Activated CD4-positive, alpha-beta memory T cell treated with anti-CD3 and anti-CD28 coated beads, Interleukin-2, amount 10 ng/mL, durations not matched to agents 7 days and 5 days (primary cell): ENCODE measurements at regions of chr15 and their contacts with region 1.

Region 1: DNA sequence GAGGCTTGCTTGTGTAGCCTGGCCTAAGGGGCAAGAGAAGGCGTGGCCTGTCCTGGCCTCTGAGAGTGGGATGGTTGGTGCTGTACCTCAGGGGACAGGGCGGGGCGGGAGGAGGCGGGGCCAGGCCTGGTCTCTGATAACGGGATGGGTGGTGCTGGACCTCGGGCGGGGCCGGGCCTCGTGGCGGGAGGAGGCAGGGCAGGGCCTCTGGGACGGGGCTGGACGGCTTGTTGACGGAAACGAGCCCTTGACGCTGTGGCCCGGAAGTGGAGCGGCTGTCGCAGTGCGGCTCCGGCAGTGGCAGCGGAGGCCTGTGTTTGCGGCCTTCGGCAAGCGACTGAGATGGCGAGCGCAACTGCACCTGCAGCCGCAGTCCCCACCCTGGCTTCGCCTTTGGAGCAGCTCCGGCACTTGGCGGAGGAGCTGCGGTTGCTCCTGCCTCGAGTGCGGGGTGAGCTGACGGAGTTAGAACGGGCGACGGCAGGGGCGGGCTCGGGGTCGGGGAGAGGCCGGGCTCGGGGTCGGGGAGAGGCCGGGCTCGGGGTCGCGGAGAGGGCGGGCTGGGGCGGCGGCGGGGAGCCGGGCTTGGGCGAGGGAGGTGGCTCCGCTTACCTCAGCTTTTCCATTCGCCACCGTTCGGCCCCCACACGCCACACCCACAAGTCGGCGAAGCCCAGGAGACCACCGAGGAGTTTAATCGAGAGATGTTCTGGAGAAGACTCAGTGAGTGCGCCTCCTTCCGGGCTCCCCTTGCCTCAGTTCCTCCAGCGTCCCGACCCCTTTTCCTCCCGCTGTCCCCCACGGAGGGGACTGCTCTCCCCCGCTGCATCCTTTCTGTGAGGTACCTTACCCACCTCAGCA is at the start of gene CCNDBP1:
- DNase-seq: peak; percentile 95
- H3K4me3 Mint-ChIP-seq: peak within 1 kb of the TSS; percentile 86
- H3K27ac Mint-ChIP-seq: peak within 1 kb of the TSS; percentile 95
- H3K4me1 Mint-ChIP-seq: peaks cover 39% of the 10 kb centered on the region
- H3K27me3 Mint-ChIP-seq: no peaks in the 10 kb centered on the region
- total RNA-seq, gene CCNDBP1: 103 to 108 TPM

Region 2: DNA sequence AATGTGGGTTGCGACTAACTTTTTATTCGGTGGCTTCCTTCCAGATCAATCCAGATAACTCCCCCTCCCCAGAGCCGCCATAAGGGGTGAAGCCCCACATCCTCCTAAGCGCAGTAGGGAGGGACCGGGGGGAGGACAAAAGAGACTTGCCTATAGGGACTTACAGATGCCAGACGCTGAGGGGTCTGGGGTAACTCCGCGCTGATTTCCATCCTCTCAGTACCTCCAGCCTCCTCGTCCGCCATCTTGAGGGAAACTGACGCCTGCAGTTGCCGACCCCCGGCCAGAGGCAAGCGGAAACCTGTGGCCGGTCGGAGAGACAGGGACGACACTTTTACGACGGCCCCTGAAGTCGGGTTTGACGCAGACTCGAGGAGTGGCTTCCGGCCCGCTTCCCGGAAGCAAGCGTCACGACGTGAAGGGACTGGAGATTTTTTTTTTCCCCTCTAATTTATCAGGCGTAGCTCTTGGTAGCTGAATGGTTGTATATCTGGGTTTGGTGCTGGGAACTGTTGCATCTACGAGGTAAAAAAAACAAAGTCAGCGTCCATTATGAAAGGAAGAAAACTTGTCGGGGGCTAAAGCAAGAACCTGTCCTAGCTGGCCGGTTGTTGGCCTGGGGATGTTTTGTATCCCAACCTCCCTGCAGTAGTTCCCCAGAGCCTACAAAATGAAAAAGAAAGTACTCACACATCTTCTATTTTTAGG is 79.5 kb before region 1 on chr15 and contains the start of gene UBR1:
- CTCF ChIA-PET with region 1: interaction called, 4 read pairs
- POLR2A ChIA-PET with region 1: interaction called, 17 read pairs
- DNase-seq: peak; percentile 93
- H3K4me3 Mint-ChIP-seq: peak within 1 kb of the TSS; percentile 96
- H3K27ac Mint-ChIP-seq: peak within 1 kb of the TSS; percentile 89
- H3K4me1 Mint-ChIP-seq: peaks cover 43% of the 10 kb centered on the region
- H3K27me3 Mint-ChIP-seq: no peaks in the 10 kb centered on the region
- total RNA-seq, gene UBR1: 41.8 to 42.4 TPM

Region 3: DNA sequence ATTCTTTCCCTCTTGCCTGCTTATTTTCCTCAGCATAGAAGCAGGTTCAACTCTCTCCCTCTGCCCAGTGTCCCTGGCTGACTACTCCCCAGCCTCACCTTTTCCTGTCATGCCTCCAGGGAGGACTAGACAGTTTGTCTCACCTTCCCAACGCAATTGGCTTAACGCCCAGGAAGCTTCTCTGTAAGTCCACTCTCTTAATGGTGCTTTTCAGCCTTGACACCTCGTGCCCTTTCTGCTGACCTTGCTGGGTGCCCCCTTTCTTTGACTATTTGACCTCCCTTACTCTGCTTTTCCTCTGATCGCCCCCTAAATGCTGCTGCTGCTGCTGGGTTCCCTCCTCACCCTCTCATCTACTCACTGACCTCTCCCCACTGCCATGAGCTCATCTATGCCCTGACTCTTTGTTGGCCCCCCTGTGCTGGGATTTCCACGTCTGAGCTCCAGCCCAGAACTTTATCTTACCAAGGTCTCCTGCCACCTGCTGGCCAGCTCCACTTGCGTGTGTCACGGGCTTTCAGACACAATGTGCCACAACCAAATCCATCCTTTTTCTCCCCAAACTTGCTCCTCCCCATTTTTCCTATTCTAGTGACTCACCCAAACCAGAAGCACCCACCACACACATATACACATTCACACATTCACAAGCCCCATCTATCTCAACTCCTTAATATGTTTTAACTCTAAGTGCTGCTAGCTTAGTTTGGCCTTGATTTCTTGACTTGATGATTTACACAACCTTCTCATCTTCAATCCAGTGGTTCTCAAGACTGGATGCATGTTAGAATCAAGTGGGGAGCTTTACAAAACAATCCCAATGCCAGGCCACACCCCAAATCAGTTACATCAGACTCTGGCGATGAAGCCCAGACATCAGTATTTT is 18.9 kb after region 1 on chr15:
- CTCF ChIA-PET with region 1: interaction called, 7 read pairs
- POLR2A ChIA-PET with region 1: interaction called, 10 read pairs
- DNase-seq: peak; percentile 55
- H3K4me3 Mint-ChIP-seq: no peak overlapping the region
- H3K27ac Mint-ChIP-seq: no peak overlapping the region
- H3K4me1 Mint-ChIP-seq: peaks cover 11% of the 10 kb centered on the region
- H3K27me3 Mint-ChIP-seq: peaks cover 14% of the 10 kb centered on the region